Right cardiac atrium (tissue), 5 donors: ENCODE measurements at regions of chr2 and their contacts with region 1.

Region 1: GRCh38 chr2:74529357-74530238 is at the starts of genes AUP1 and HTRA2:
- DNase-seq: peak; percentile 99
- ATAC-seq: peak; percentile 97
- H3K4me3 ChIP-seq: peak within 1 kb of the TSS; percentile 92
- H3K27ac ChIP-seq: peak within 1 kb of the TSS; percentile 85
- H3K4me1 ChIP-seq: peaks cover 3% of the 10 kb centered on the region
- H3K27me3 ChIP-seq: no peaks in the 10 kb centered on the region
- total RNA-seq, gene AUP1: 52.3 to 69.6 (median 63.3) TPM
- total RNA-seq, gene HTRA2: 26.3 to 31.2 (median 28.9) TPM

Region 2: GRCh38 chr2:74587664-74588277 is 58.2 kb after region 1 on chr2:
- intact Hi-C with region 1: loop called in 1 of 4 experiments (anchors 10 kb)
- DNase-seq: peak; percentile 52 to 81 (median 63)
- ATAC-seq: peak; percentile 92 to 93
- H3K4me3 ChIP-seq: no peak overlapping the region
- H3K27ac ChIP-seq: no peak overlapping the region
- H3K4me1 ChIP-seq: no peaks in the 10 kb centered on the region
- H3K27me3 ChIP-seq: no peaks in the 10 kb centered on the region